Posterior vena cava (tissue), 2 donors: ENCODE measurements at regions of chr12 and their contacts with region 1.

Region 1: DNA sequence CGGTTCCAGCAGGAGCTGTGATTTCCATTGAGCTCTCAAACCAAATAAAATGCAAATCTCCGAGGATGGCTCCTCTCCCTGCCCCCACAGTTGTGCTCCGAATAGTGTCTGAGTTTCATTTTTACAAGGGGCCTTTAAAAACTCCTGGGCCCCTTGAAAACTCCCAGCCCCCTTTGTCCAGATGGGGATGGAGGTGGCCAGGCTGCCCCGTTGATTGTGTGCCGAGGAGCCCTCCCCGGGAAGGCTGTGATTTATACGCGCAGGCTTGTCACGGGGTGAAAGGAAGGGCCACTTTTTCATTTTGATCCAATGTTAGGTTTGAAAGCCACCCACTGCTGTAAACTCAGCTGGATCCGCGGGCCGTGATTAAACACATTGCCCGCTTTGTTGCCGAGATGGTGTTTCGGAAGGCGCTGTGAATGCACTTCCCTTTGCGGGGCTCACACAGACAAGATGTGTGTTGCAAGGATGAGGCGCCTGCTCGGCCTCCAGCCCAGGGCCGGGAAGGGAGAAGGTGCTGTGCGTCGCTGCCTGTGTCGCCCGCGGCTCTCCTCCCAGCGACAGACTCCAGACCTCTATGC is 98.8 kb downstream of the TMEM132C start:
- DNase-seq: no peak

Region 2: GRCh38 chr12:128339126-128339520 is 26.6 kb before region 1 on chr12:
- intact Hi-C with region 1: loop called in 1 of 2 experiments (anchors 1 kb)
- DNase-seq: no peak

Region 3: GRCh38 chr12:128353301-128353700 is 12.4 kb before region 1 on chr12:
- intact Hi-C with region 1: loop called in 1 of 2 experiments (anchors 1 kb)
- DNase-seq: no peak